Caki2 (cell line): ENCODE measurements at regions of chr5 and their contacts with region 1.

Region 1: DNA sequence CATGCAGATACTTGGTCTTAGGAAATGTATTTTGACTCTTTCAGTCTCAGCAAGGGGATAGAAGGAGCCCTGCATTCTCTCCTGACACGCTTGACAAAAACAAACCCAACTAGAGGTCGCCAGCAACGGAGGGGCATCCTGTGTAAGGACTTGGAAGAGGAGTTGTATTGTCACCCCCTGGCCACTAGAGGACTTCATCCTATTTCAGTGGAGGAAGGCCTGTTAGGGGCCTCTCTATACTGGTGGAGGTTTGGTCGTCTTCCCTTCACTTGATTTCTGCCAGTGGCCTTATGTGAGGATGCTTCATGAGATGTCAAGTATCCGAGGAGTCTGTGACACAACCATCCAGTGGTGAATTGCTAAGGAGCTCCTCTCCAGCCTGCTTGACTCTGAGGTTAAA is 122.8 kb upstream of the STC2 start:
- DNase-seq: peak; percentile 26

Region 2: GRCh38 chr5:173412566-173412965 is 38.5 kb before region 1 on chr5:
- in situ Hi-C with region 1: loop called (anchors 5 kb)
- DNase-seq: peak; percentile 98